ENCODE measurements at regions of chr14 and their contacts with region 1.

Region 1: DNA sequence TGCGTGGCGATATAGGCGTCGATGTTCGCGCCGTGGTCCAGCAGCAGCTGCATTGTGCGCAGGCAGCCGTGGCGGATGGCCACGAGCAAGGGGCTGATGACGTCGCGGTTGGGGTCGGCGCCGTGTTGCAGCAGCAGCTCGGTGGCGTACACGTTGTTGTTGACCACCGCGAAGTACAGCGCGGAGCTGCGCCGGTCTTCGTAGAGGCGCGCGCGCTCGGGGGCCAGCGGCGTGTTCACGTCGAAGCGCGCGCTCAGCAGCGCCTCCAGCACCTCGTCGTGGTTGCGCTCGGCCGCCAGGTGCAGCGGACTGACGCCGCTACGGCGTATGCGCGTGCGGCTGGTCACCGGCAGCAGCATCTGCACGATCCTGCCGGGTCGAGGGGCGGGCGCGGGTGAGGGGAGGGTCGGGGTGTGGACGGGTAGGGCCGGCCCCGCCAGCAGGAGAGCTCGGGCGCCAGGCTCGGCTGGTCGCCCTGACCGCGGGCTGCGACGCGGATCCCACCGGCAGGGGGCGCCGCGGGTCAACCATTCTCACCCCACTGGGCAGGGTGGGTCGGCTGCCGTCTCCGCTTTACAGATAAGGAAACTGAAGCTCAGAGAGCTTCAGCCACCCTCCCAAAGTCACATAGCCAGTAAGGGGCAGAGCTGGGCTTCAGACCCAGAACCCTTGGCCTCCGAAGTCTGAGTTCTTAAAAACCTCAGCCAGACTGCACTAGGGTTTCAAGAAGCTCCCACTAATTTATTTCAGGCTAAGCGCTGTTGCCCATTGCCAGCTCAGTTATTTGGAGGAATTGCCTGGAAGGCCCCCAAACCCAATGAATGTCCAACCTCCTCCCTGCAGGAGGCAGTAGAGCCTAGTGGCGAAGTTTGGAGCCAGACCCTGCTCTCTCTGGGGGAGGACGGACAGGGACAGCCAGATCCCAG is 12.4 kb downstream of the FAM181A start:
- DNase-seq: peak; percentile 91
- CTCF ChIP-seq: peak; percentile 94

Region 2: DNA sequence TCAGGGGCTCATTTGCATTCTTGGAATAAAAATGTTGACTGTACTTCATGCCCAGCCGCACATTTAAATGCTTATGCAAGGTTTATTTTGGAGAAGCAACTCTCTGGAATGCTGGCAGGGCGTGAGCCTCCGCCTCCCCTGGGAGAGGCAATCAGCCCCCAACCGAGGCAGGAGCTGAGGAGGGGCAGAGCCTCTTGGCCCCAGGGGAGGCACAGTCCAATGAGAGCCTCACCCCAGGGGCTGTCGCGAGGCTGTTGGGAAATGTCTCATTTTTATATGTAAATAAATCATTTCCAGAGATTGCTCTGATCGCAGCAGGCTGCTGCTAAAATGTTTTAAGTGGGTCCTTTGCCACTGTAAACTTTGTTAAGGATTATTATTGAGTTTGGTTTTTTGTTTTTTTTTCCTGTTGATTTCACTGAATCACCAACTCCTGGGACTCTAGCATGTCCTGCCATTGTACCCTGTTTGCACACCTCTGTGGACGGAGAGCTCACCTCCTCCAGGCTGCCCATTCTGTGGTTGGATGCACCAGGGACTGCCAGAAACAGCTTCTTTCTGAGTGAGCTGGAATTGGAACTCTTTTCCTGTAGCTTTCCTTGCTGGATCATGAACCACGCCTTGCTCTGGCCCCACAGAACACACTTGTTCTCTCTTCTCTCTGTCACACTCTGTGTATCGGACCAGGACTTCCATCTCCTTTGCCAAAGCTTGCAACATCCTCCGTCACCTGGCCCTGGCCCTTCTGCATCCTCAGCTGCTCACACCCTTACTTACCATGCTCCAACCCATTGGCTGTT is 59.3 kb before region 1 on chr14:
- CTCF ChIA-PET with region 1: no interaction called
- POLR2A ChIA-PET with region 1: no interaction called
- DNase-seq: no peak
- CTCF ChIP-seq: no peak

Region 3: DNA sequence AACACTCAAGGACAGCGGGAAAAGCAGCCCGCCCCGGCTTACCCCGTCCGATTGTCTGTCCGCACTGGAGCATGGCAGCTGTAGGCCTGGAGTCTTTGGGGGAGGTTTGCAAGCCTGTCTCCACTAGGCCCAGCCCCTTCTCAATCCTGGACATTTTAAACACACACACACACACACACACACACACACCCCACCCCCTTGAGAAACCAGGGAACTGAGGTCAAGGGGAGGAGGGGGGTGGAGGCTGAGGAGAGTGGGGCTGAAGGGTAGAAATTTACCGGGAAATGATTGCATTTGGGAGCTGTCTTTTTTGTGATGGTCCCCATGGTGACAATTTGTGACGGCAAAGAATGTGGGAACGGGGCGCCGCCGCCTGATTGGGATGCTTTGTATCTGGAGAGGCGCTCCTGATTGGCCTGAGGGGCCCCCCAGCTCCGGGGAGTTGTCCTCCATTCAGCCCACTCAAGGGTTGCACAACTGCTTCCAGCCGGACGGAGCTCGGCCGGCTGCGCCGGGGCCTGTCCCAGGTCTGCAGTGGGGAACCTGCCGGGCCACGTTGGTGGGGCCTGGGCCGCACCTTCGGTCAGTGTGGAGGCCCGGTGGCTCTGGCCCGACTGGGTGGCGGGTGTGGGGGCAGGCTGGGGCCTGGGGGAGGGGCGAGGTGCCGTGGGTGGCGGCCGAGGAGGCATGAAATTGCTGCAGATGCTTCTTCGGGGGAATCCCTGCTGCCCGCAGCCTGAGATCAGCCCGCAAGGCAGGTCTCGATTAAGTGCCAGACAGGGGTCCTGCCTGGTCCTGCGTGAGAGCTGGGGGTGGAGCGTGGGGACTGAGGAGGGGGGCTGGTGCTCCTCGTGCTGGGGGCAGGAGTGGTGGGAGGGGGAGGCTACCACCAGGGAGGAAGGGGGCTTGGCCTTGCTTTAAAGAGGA is 12.4 kb before region 1 on chr14 and contains the start of gene FAM181A:
- CTCF ChIA-PET with region 1: interaction called, 19 read pairs
- POLR2A ChIA-PET with region 1: no interaction called
- DNase-seq: no peak
- CTCF ChIP-seq: no peak

Region 4: GRCh38 chr14:93959239-93960107 is 19.9 kb after region 1 on chr14:
- CTCF ChIA-PET with region 1: interaction called, 156 read pairs
- POLR2A ChIA-PET with region 1: interaction called, 8 read pairs
- DNase-seq: peak; percentile 93
- CTCF ChIP-seq: no peak

Region 5: DNA sequence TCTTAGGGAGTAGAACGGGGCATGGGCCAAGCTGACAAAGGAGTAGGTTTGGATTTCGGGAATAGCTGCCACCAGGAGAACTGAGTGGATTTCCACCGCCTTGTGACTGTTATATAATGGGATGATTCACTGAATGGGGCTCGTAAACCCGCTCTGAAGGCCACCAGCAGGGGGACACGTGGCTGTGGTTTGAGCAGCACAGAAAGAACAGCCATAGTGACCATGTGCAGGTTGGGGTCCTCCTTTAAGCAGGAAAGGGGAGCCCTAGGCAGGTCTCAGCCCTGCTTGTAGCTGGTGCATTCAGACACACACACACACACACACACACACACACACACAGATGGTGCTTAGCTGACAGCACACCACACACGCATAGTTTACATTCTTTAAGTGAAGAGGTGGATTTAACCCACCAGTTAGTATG is 45.4 kb after region 1 on chr14:
- CTCF ChIA-PET with region 1: interaction called, 664 read pairs
- POLR2A ChIA-PET with region 1: no interaction called
- DNase-seq: no peak
- CTCF ChIP-seq: peak; percentile 29

Region 6: DNA sequence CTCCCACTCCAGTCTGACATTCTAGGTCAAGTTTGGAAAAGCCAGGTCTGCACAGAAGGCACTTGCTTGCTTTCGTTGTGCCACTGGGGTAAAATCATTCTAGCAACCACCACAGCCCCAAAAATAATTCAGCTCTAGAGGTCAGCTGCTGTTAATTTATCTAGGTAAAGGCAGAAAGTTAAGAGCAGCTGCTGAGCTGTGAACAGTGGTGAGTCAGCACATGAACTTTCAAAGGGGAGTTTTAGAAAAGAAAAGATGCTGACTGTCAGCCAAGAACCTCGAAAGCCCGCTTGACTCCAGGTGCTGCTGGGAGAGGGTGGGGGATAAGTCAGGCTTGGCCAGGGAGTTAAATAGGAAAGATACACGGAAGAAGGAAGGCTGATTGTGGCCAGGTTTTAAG is 70.2 kb after region 1 on chr14:
- CTCF ChIA-PET with region 1: interaction called, 664 read pairs
- POLR2A ChIA-PET with region 1: no interaction called
- DNase-seq: peak; percentile 67
- CTCF ChIP-seq: no peak

Region 7: DNA sequence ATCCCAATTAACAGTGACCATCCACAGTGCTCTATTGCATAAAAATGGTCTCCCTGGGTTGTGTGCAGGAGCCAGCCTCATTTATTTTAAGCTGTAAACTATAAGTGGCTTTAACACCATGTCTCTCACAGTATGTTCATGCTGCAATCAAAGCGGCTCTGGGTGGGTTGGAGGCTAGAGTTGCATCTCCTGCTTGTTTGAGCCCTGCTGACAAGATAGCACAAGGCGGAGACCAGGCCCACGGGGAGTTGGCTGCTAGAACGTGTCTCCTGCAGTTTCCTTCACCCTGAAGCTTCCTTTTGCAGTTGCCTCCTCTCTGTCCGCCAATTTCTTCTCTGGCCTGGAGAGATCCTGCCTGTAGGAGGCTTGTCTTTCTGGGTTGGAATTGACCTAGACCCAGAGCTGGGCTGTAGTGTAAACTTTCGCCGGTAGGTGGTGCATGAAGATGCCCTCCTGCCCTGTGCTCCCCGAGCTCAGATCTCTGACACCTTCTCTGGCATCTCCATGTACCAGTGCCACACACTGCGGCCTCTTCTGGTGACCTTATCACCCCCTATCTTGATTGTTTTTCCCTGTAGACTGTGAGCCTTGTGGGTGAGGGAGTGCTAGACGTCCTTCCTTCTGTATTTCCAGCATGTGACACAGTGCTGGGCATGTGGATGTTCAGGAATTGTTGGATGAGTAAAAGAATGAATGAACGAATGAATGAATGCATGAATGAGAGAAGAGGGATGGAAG is 96.9 kb after region 1 on chr14:
- CTCF ChIA-PET with region 1: interaction called, 30 read pairs
- POLR2A ChIA-PET with region 1: no interaction called
- DNase-seq: peak; percentile 84
- CTCF ChIP-seq: peak; percentile 75

Region 8: DNA sequence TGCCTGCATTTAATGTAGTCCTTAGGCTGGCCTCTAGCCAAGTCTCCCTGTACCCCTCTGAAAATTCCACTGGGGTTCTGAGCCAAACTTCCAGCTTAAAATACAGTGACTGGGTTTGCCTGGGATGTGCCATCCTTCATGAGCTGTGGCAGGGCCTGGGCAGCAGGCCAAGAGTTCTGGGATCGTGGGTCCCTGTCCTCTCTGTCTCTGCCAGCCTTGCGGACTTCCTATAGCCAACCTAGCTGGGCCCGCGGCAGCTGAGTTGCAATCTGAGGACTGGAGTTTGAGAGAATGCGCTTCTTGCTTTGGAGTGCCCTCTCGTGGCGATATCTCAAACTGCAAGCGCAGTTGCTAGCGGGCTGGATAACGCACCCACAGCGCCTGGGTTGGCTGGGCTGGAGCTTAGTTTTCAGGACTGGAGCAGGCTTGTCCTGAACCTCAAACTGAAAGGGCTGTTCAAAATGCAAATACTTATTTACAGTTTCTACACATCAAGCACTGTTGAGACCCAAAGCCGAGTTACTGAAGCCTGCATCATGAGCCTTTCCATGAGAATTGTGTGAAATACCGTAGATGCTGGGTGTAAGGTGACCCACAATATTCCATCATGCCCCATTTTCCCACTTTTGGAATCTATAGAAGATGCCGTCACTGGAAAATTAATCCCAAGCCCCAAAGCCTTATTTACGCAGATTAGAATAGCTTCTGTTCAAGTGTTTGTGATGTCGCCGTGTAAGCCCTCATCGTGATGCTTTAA is 197.2 kb after region 1 on chr14:
- CTCF ChIA-PET with region 1: interaction called, 12 read pairs
- POLR2A ChIA-PET with region 1: no interaction called
- DNase-seq: peak; percentile 75
- CTCF ChIP-seq: peak; percentile 93